Posterior cingulate gyrus (tissue), 11 donors: ENCODE measurements at regions of chr5 and their contacts with region 1.

Region 1: GRCh38 chr5:146878476-146879172 is at the start of gene PPP2R2B:
- DNase-seq: peak; percentile 49 to 97 (median 81)

Region 2: DNA sequence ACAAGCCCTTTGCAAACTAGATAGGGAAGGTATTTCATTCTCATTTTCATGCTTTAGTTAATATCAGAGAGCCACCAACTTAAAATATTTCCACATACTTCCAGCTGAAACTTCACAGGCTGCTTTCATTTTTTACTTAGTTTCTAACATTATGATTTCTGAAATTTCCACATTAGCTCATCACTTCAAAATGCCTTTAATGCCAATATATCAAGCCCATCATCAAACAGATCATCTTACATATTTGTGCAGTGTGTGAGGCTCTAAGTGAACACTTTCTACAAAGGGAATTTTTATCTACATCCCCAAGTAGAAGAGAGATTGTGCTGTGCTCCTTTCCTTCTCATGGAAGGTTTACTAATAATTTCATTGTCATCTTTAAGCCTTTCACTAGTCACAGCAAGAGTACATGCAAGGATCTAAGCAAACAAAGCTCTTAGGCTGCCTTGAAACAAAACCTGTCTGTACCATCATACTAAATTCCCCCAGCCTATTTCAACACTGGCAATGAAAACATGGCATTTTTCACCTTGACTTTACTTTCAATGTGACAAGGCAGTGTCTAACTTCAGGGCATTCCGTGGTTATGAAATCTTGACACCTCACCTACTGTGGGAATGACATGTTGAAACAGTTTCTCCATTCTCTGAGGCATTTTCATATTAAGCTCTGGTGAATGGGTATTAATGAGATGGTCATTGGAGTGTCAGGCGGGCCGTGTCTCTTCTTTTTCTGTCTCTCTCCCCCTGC is 45.5 kb before region 1 on chr5:
- intact Hi-C with region 1: loop called (anchors 5 kb)
- DNase-seq: no peak